ENCODE measurements at regions of chr15 and their contacts with region 1.

Region 1: DNA sequence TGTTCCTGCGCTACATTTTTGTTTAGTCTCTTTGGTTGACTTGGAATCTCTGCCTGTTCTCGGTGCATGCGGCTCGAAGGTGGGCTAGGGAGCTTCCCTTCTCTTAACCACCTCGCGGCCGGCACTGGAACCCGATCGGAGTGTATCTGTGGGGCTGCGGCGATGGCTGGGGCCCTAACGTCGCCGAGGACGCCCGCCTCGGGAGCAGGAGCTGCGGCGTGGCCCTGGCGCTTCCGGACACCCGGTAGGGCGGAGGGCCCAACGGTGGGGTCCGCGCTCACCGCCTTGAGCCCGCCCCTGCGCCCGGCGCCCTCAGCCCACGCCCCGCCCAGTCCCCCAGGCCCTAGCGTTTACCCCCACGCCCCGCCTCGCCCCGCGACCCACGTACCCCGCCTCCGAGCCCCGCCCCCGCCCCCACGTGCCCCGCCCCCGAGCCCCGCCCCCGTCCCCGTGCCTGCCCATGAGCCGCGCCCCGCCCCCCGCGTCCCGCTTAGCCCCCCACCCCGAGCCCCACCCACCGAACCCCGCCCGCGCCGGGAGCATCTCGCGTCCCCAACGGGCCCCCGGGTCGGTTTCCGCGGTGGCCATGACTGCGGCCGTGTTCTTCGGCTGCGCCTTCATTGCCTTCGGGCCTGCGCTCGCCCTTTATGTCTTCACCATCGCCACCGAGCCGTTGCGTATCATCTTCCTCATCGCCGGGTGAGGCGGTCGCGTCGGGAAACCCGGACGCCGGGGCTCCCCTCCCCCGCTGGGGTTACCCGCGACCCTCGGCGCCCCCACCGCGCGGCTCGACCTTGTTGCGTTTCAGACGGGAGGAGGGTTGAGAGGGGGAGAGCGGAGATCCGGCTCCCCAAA is at the start of gene APH1B:
- DNase-seq: peak; percentile 75 to 83 (median 77)
- H3K4me3 ChIP-seq: peak within 1 kb of the TSS; percentile 66 to 84
- H3K4me3 Mint-ChIP-seq: peak within 1 kb of the TSS; percentile 84 to 90 (median 88)
- H3K27ac ChIP-seq: peak within 1 kb of the TSS; percentile 68
- H3K27ac Mint-ChIP-seq: peak within 1 kb of the TSS; percentile 79 to 94 (median 92)
- H3K4me1 ChIP-seq: peaks cover 31% of the 10 kb centered on the region
- H3K4me1 Mint-ChIP-seq: peaks cover 19 to 46% (median 31%) of the 10 kb centered on the region in 4 donors
- H3K27me3 ChIP-seq: no peaks in the 10 kb centered on the region
- H3K27me3 Mint-ChIP-seq: no peaks in the 10 kb centered on the region
- total RNA-seq, gene APH1B: 23.0 to 28.4 TPM

Region 2: DNA sequence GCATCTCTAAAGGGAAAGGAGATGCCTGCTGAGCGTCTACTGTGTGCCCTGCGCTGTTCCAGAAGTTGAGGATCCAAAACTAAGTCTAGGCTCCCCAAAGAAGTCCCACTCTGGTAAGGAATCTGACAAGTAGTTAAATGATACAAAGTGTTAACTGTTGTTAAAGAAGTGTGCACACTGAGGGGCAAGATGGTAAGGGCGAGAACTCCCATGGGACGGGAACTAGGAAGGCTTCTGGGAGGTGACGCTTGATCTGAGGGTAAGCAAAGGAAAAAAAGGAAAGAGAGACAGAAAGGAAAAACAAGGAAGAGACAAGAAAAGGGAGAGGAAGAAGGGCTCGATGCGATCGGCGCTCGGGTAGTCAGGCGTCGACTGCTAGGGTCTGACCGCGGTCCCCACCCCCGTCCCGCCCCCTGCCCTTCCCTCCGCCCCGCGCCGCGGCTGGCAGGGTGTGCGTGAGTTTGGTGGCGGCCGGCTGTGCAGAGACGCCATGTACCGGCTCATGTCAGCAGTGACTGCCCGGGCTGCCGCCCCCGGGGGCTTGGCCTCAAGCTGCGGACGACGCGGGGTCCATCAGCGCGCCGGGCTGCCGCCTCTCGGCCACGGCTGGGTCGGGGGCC is 155.8 kb before region 1 on chr15 and contains the start of gene LACTB:
- CTCF ChIA-PET with region 1: no interaction called
- POLR2A ChIA-PET with region 1: interaction called, 4 read pairs
- intact Hi-C with region 1: loop called (anchors 2 kb)
- DNase-seq: peak; percentile 73 to 79 (median 77)
- H3K4me3 ChIP-seq: peak within 1 kb of the TSS; percentile 69 to 76
- H3K4me3 Mint-ChIP-seq: peak within 1 kb of the TSS; percentile 87 to 98 (median 93)
- H3K27ac ChIP-seq: peak within 1 kb of the TSS; percentile 67
- H3K27ac Mint-ChIP-seq: peak within 1 kb of the TSS; percentile 84 to 96 (median 94)
- H3K4me1 ChIP-seq: peaks cover 10% of the 10 kb centered on the region
- H3K4me1 Mint-ChIP-seq: peaks cover 7 to 28% (median 14%) of the 10 kb centered on the region in 4 donors
- H3K27me3 ChIP-seq: no peaks in the 10 kb centered on the region
- H3K27me3 Mint-ChIP-seq: no peaks in the 10 kb centered on the region
- total RNA-seq, gene LACTB: 11.7 to 12.1 TPM

Region 3: GRCh38 chr15:63166219-63166618 is 111.0 kb before region 1 on chr15:
- CTCF ChIA-PET with region 1: interaction called, 10 read pairs
- POLR2A ChIA-PET with region 1: no interaction called
- intact Hi-C with region 1: no loop called
- DNase-seq: peak in 1 of 5 donors; percentile 6
- H3K4me3 ChIP-seq: no peak overlapping the region
- H3K4me3 Mint-ChIP-seq: no peak overlapping the region
- H3K27ac ChIP-seq: no peak overlapping the region
- H3K27ac Mint-ChIP-seq: no peak overlapping the region
- H3K4me1 ChIP-seq: no peaks in the 10 kb centered on the region
- H3K4me1 Mint-ChIP-seq: peaks cover 0 to 5% (median 3%) of the 10 kb centered on the region in 4 donors
- H3K27me3 ChIP-seq: no peaks in the 10 kb centered on the region
- H3K27me3 Mint-ChIP-seq: no peaks in the 10 kb centered on the region

Measured in CD4-positive, alpha-beta memory T cell (primary cell).